Activated CD4-positive, alpha-beta T cell treated with anti-CD3 and anti-CD28 coated beads for 36 hours (primary cell): ENCODE measurements at regions of chr10 and their contacts with region 1.

Region 1: GRCh38 chr10:100148353-100149211 is 37.2 kb downstream of the ERLIN1 start:
- DNase-seq: peak; percentile 77
- ATAC-seq: peak; percentile 97
- H3K4me3 Mint-ChIP-seq: no peak overlapping the region
- H3K27ac Mint-ChIP-seq: peak overlapping the region; percentile 82
- H3K4me1 Mint-ChIP-seq: peaks cover 35% of the 10 kb centered on the region
- H3K27me3 Mint-ChIP-seq: peaks cover 7% of the 10 kb centered on the region

Region 2: GRCh38 chr10:99870123-99870730 is 278.4 kb before region 1 on chr10:
- CTCF ChIA-PET with region 1: no interaction called
- POLR2A ChIA-PET with region 1: no interaction called
- intact Hi-C with region 1: loop called in 1 of 2 experiments (anchors 5 kb)
- DNase-seq: peak; percentile 75
- ATAC-seq: peak; percentile 96
- H3K4me3 Mint-ChIP-seq: peak overlapping the region; percentile 13
- H3K27ac Mint-ChIP-seq: no peak overlapping the region
- H3K4me1 Mint-ChIP-seq: peaks cover 19% of the 10 kb centered on the region
- H3K27me3 Mint-ChIP-seq: peaks cover 85% of the 10 kb centered on the region

Region 3: GRCh38 chr10:100009793-100010676 is 138.5 kb before region 1 on chr10 and contains the start of gene DNMBP:
- CTCF ChIA-PET with region 1: no interaction called
- POLR2A ChIA-PET with region 1: no interaction called
- intact Hi-C with region 1: loop called in 1 of 2 experiments (anchors 2 kb)
- DNase-seq: peak; percentile 91
- ATAC-seq: peak; percentile 91
- H3K4me3 Mint-ChIP-seq: peak within 1 kb of the TSS; percentile 74
- H3K27ac Mint-ChIP-seq: peak within 1 kb of the TSS; percentile 79
- H3K4me1 Mint-ChIP-seq: peaks cover 46% of the 10 kb centered on the region
- H3K27me3 Mint-ChIP-seq: peaks cover 8% of the 10 kb centered on the region
- total RNA-seq, gene DNMBP: 1.9 to 2.4 TPM

Region 4: DNA sequence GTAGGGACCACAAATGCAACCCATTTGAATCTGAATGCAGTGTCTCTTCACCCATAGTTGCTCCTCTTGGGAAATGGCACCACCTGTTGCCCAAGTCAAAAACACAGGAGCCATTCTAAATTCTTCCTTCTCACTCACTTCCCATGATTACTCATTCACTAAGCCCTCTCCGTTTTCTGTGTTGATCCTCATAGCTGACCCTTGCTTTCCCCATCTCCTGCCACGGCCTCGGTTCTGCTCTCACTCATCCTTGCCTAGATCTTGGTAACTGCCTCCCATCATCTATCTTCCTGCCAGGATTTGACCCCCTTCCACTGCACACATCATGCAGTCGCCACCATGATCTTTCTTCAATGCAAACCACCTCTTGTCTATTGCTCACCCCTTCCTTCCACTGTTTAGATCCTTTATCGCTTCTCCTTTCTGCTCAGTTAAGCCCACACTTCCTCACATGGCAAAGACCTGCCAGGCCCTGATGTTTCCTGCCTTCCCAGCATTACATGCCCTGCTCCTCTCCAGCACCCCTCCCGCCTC is 47.9 kb before region 1 on chr10:
- CTCF ChIA-PET with region 1: no interaction called
- POLR2A ChIA-PET with region 1: no interaction called
- intact Hi-C with region 1: no loop called
- DNase-seq: no peak
- ATAC-seq: no peak
- H3K4me3 Mint-ChIP-seq: no peak overlapping the region
- H3K27ac Mint-ChIP-seq: no peak overlapping the region
- H3K4me1 Mint-ChIP-seq: no peaks in the 10 kb centered on the region
- H3K27me3 Mint-ChIP-seq: peaks cover 36% of the 10 kb centered on the region

Region 5: GRCh38 chr10:100167553-100168312 is 19.2 kb after region 1 on chr10:
- CTCF ChIA-PET with region 1: interaction called, 4 read pairs
- POLR2A ChIA-PET with region 1: no interaction called
- intact Hi-C with region 1: loop called in 1 of 2 experiments (anchors 1 kb)
- DNase-seq: no peak
- ATAC-seq: peak; percentile 38
- H3K4me3 Mint-ChIP-seq: peak overlapping the region; percentile 6
- H3K27ac Mint-ChIP-seq: peak overlapping the region; percentile 69
- H3K4me1 Mint-ChIP-seq: peaks cover 43% of the 10 kb centered on the region
- H3K27me3 Mint-ChIP-seq: no peaks in the 10 kb centered on the region

Region 6: DNA sequence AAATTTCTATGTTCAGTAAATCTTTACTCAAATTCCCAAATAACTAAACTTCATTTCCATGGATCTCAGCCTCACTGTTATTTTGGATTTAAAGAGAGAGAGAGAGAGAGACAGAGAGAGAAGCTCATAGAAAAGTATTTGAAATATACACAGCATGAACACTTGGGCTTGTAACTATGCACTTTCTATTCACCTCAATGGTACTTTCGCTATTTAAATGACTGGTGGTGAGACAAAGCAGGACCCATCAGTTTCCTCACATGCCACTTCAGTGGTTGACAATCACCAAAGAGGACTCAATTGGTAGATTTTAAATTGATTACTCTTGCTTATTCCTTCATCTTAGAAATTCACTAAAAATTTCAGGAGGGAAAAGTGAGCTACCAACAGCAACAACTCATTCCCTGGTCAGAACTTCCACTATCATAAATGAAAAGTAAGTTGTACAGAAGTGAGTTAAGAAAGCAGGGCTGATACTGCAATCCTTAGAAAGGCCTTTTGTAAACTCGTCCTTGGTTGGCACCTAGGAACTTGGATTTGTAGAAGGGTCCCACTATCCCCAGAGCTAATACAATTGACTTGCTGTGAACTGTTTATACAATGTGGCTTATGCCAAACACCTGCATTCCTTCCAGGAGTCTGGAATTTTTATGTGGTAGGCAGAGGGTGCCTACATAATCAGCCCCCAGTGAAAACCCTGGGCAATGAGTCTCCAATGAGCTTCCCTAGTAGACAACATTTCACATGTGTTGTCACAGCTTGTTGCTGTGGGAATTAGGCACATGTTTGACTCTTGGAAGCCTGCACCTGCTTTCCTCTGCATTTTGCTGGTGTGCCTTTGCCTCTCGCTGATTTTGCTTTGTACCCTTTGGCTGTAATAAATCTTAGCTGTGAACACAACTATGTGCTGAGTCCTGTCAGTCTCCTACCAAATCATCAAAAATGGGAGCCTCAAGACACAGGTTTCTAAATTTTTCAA is 26.4 kb after region 1 on chr10:
- CTCF ChIA-PET with region 1: interaction called, 8 read pairs
- POLR2A ChIA-PET with region 1: no interaction called
- intact Hi-C with region 1: loop called in 1 of 2 experiments (anchors 2 kb)
- DNase-seq: peak; percentile 21
- ATAC-seq: peak; percentile 98
- H3K4me3 Mint-ChIP-seq: no peak overlapping the region
- H3K27ac Mint-ChIP-seq: peak overlapping the region; percentile 7
- H3K4me1 Mint-ChIP-seq: peaks cover 43% of the 10 kb centered on the region
- H3K27me3 Mint-ChIP-seq: no peaks in the 10 kb centered on the region